WTC11 (cell line): ENCODE measurements at regions of chr14 and their contacts with region 1.

Region 1: DNA sequence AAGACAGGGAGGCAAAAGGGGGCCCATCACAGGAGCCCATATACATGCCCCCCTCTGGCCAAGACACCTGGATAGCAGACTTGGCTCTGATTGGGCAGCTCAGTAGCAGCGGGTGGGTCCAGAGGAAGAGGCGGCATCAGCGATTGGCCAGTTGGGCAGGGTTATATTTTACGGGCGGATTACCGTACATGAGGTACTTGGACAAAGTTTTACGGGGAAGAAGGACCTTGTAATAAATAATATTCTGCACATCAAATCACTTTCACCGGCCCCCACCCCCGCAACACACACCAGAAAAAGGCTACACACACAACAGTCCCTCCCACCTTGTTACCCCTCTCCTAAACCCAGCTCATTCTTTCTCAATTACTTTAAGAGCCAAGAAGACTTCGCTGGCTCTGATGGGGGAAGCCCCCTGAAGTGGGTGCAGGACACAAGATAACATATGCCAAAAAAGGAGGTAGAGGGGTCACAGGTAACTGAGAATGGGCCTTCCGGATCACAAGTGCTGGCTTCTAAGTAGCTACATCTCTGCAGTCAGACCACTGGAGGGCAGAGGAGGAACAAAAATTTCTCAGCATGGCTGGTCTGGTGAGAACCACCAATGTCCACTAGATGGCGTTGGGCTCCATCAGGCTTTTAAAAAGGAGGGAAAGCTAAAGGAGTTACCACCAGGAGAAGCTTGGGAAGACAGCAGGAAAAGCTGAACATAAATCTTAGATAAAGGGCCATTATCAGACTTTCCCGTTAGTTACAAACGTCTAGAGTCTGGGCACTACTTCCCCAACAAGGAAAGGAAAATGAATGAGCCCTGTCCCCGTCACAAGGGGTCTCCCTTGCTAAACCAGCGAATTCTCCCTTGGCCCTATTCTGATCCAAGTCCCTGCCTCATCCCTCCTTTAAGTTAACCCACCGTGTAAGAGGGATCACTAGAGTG is 11.4 kb upstream of the CDH24 start:
- DNase-seq: peak; percentile 86
- ATAC-seq: peak; percentile 70
- H3K4me3 Mint-ChIP-seq: peak overlapping the region; percentile 48
- H3K27ac Mint-ChIP-seq: peak overlapping the region; percentile 71; the same call in 1 of the 2 replicates
- H3K4me1 Mint-ChIP-seq: peaks cover 38% of the 10 kb centered on the region
- H3K27me3 Mint-ChIP-seq: no peaks in the 10 kb centered on the region
- CTCF ChIP-seq: peak; percentile 74

Region 2: DNA sequence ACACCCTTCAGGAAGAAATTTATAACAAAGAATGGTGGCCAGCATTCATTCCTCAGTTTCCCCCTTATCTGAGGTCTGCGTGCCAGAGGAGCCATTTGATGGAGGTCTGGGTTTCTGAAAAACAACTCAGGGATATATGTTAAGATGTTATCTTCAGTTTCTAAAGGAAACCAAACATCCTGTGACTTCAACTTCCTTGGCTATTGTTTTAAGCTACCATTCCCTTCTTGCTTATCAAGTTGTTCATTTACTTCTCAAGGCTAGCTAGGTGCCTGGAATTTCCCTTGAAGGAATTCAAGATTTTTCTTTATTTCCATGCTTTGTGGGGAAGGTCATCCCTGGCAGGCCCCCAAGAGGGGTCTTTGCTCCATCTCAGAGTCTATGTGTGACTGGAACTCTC is 329.3 kb before region 1 on chr14:
- CTCF ChIA-PET with region 1: no interaction called
- POLR2A ChIA-PET with region 1: no interaction called
- DNase-seq: no peak
- ATAC-seq: no peak
- H3K4me3 Mint-ChIP-seq: no peak overlapping the region
- H3K27ac Mint-ChIP-seq: no peak overlapping the region
- H3K4me1 Mint-ChIP-seq: no peaks in the 10 kb centered on the region
- H3K27me3 Mint-ChIP-seq: peaks cover 3% of the 10 kb centered on the region; the same call in 1 of the 2 replicates
- CTCF ChIP-seq: no peak

Region 3: GRCh38 chr14:22986508-22987054 is 82.2 kb before region 1 on chr14:
- CTCF ChIA-PET with region 1: interaction called, 52 read pairs
- POLR2A ChIA-PET with region 1: interaction called, 3 read pairs
- DNase-seq: peak; percentile 95
- ATAC-seq: peak; percentile 57
- H3K4me3 Mint-ChIP-seq: no peak overlapping the region
- H3K27ac Mint-ChIP-seq: no peak overlapping the region
- H3K4me1 Mint-ChIP-seq: peaks cover 5% of the 10 kb centered on the region
- H3K27me3 Mint-ChIP-seq: no peaks in the 10 kb centered on the region; the same call in 1 of the 2 replicates
- CTCF ChIP-seq: peak; percentile 83

Region 4: DNA sequence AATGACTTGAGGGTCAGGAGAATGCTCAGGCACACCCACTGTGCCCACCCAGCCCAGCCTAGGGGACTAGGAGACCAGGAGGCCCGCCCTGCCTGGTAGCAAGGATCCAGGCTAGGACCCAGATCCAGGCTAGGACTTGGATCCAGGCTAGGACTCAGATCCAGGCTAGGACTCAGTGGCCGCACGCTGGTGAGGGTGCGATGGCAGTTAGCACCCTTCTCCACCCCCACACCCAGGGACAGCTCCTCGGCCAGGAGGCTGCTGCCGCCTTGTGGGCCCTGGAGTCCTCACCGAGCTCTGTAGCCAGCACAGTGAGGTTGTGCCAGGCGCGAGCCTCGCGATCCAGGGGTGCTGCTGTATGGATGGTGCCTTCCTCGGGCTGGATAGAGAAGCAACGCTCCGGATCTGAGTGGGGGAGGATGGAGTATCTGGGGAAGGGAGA is 16.5 kb before region 1 on chr14:
- CTCF ChIA-PET with region 1: interaction called, 160 read pairs
- POLR2A ChIA-PET with region 1: interaction called, 3 read pairs
- DNase-seq: peak; percentile 68
- ATAC-seq: peak; percentile 55
- H3K4me3 Mint-ChIP-seq: no peak overlapping the region
- H3K27ac Mint-ChIP-seq: no peak overlapping the region
- H3K4me1 Mint-ChIP-seq: peaks cover 15% of the 10 kb centered on the region
- H3K27me3 Mint-ChIP-seq: peaks cover 5% of the 10 kb centered on the region; the same call in 1 of the 2 replicates
- CTCF ChIP-seq: no peak

Region 5: DNA sequence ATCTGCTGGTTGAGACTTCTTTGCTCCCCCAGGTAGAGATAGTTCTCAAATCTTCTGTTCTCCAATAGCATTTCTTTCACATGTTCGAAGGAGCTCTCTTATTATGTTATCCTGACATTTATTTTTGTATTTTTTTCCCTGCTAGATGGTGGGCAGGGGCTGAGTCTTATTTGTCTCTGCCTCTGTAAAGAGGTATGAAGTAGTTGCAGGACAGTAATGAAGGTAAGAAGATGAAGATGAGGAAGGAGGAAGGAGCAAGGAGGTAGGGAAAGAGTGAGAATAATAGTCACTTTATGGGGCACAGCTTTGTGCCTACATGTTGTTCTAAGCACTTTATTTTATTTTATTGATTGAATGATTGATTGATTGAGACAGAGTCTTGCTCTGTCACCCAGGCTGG is 41.0 kb after region 1 on chr14:
- CTCF ChIA-PET with region 1: interaction called, 33 read pairs
- POLR2A ChIA-PET with region 1: interaction called, 3 read pairs
- DNase-seq: no peak
- ATAC-seq: no peak
- H3K4me3 Mint-ChIP-seq: no peak overlapping the region
- H3K27ac Mint-ChIP-seq: no peak overlapping the region
- H3K4me1 Mint-ChIP-seq: peaks cover 33% of the 10 kb centered on the region
- H3K27me3 Mint-ChIP-seq: peaks cover 14% of the 10 kb centered on the region
- CTCF ChIP-seq: no peak

Region 6: DNA sequence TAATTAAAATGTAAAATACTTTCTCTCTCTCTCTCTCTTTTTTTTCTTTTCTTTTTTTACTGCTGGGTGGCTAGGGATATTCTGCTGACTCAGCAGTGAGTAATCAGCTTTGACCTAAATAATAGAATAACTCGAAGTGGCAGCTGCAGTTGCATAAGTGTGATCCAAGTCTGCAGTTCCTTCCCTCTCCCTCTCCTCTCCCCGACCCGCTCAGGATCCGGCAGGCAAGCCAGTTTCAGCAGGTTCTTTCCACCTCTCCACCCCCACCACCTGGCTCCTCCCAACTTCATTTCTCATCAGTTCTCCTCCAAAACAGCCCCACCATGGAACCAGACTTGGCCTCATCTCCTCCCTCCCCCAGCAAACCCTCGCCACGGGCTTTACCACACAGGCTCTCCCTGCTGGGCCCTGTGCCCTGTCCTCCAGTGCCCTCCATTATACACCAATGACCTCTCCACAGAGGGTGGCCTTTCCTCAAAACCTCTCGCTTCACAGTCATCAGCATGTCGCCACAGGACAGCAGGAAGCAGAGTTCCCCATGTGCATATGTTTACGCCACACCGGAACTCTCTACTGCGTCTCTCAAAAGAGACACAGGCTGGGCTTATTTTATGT is 92.3 kb after region 1 on chr14:
- CTCF ChIA-PET with region 1: interaction called, 10 read pairs
- POLR2A ChIA-PET with region 1: no interaction called
- DNase-seq: peak; percentile 88
- ATAC-seq: peak; percentile 94
- H3K4me3 Mint-ChIP-seq: peak overlapping the region; percentile 53
- H3K27ac Mint-ChIP-seq: peak overlapping the region; percentile 98
- H3K4me1 Mint-ChIP-seq: peaks cover 65% of the 10 kb centered on the region
- H3K27me3 Mint-ChIP-seq: no peaks in the 10 kb centered on the region
- CTCF ChIP-seq: no peak

Region 7: DNA sequence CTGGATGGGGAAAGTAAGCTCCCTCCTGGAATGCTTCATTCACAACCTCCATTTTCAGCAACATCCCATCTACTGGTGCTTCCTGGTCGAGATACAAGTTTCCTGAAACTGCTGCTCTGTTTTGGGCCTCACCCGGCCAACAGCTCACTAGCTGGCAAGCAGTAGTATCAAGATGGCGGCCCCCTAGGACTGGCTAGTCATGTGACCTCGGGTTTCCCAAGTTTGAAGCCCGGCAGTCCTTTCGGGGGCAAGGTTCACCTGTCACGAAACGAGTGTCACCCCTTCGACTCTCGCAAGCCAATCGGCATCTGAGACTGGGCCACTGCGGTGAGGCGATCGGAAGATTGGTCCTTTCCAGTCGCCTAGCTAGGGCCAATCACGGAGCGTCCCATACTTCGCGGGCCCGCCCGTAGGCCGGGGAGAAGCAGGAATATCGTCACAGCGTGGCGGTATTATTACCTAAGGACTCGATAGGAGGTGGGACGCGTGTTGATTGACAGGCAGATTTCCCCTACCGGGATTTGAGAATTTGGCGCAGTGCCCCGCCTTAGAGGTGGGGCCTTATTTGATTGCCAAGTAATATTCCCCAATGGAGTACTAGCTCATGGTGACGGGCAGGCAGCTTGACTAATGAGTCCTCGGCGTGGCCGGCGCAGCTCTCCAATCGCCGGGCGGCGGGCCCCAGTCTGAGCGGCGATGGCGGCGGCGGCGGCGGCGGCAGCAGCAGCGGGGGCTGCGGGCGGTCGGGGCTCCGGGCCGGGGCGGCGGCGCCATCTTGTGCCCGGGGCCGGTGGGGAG is 252.2 kb after region 1 on chr14 and contains the start of gene PABPN1:
- CTCF ChIA-PET with region 1: interaction called, 11 read pairs
- POLR2A ChIA-PET with region 1: interaction called, 4 read pairs
- DNase-seq: peak; percentile 98
- ATAC-seq: peak; percentile 93
- H3K4me3 Mint-ChIP-seq: peak within 1 kb of the TSS; percentile 96
- H3K27ac Mint-ChIP-seq: peak within 1 kb of the TSS; percentile 99
- H3K4me1 Mint-ChIP-seq: peaks cover 26% of the 10 kb centered on the region
- H3K27me3 Mint-ChIP-seq: no peaks in the 10 kb centered on the region
- CTCF ChIP-seq: no peak
- total RNA-seq, gene PABPN1: 290 to 321 TPM (median 295 TPM) in 3 replicates